AG04449 (cell line): ENCODE measurements at regions of chr13 and their contacts with region 1.

Region 1: DNA sequence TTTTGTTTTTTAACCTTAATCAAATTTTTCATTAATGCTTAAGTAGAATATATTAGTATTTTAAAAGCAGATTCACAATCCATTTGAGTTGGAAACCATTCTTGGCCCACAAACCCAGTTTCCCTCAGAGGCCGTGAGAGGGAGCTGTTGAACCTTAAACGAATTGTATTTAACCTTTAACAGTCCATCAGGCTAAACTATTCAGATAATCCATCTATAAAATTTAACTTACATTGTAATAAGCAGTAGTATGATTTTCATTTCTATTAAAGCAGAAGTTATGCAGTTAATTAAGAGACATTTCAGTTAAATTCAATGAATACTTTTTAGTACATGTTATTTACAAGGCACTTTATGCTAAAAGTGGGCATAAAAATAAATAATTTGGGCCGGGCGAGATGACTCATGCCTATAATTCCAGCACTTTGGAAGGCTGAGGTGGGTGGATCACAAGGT is 123.1 kb upstream of the C1QTNF9B start:
- DNase-seq: no peak
- H3K4me3 ChIP-seq: no peak overlapping the region
- CTCF ChIP-seq: peak; percentile 65

Region 2: GRCh38 chr13:24005755-24006281 is 14.6 kb before region 1 on chr13:
- CTCF ChIA-PET with region 1: interaction called, 27 read pairs
- POLR2A ChIA-PET with region 1: no interaction called
- DNase-seq: no peak
- H3K4me3 ChIP-seq: no peak overlapping the region
- CTCF ChIP-seq: no peak

Region 3: DNA sequence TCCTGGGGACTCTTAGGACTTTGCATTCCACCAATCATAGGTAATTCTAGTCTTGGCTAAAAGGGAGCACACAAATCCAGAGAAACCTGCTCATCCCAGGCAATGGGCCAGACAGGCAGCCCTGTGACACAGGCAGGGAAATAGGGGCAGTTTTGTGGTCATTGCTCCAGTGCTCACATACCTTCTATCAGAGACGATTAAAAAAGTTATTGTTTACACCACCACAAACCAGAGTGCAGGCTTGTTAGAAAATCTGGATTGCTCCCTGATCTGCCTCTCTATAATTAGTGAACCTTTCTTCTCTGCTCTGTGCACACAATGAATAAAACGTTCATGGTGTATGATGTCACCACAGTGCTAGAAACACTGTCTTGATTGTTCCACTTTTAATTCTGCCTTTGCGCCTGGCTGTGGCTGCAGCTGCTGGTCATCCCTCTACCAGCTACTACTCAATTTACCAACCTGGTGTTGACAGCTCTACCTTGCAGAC is 18.5 kb after region 1 on chr13:
- CTCF ChIA-PET with region 1: interaction called, 26 read pairs
- POLR2A ChIA-PET with region 1: no interaction called
- DNase-seq: no peak
- H3K4me3 ChIP-seq: no peak overlapping the region
- CTCF ChIP-seq: no peak

Region 4: DNA sequence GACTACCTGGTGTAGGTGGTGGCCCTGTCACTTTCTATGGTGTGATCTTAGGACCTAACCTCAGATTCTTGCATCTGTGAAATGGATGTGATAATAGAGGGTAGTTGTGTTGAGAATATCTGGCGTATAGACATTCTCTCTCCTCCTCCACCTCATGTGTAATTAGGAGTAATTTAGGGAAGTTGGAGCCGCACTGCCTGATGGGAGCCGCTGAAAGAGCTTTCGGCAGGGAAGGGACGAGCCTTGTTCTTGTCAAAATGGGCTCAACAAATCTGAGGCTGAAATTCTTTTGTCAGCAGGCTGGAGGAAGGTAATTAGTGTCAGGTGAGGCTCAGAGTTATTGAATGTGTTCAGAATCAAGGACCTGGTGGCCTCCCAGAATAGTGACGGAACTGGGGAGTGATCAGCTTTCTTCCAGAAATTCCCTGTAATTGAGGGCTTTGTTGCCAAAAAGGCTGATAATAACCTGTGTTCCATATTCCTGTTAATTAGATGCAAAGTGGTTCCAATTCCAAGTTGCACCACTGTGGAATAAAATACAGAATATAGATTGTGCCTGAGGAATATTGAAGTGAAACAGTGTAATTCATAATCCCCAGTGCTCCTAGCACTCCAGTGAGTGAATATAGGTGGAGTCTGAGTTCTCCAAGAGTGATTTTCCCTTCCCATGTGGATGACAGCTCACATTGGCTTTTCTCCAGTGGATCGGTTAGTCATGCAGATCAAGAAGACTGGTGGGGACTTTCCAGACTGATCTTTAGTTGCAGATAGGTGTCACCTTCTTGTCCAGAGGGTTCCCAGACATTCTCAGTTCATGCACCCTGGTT is 187.7 kb after region 1 on chr13:
- CTCF ChIA-PET with region 1: interaction called, 14 read pairs
- POLR2A ChIA-PET with region 1: no interaction called
- DNase-seq: peak; percentile 71
- H3K4me3 ChIP-seq: no peak overlapping the region
- CTCF ChIP-seq: no peak

Region 5: DNA sequence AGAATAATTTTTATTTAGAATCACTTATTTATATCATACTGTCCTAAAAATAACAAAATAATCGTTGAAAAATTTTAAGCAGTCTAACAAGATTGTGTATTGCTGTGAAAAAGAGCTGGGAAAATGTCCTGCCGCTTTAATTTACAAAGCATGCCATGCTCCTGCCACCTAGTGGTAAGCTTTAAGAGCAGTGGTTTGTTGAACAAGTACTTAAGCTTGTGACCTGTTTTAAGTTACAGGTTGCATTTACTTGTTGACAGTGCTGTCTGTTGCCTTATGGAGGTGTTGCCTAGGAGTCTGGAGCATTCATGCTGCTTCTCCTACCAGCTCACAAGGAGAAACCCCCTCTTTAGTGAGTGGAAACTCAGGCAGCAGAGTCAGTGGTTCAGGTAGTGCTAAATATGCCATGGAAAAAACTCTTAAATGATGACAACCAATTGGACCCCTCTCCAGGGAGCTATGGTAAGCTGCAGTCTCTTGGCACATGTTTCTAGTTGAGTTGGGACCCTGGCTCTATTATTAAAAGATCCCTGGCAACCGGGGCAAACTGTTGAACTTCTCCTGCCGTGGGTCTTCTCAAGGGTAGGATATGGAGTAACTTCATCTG is 208.6 kb after region 1 on chr13:
- CTCF ChIA-PET with region 1: interaction called, 438 read pairs
- POLR2A ChIA-PET with region 1: no interaction called
- DNase-seq: no peak
- H3K4me3 ChIP-seq: no peak overlapping the region
- CTCF ChIP-seq: peak; percentile 81